CD8-positive, alpha-beta T cell (primary cell): ENCODE measurements at regions of chr3 and their contacts with region 1.

Region 1: DNA sequence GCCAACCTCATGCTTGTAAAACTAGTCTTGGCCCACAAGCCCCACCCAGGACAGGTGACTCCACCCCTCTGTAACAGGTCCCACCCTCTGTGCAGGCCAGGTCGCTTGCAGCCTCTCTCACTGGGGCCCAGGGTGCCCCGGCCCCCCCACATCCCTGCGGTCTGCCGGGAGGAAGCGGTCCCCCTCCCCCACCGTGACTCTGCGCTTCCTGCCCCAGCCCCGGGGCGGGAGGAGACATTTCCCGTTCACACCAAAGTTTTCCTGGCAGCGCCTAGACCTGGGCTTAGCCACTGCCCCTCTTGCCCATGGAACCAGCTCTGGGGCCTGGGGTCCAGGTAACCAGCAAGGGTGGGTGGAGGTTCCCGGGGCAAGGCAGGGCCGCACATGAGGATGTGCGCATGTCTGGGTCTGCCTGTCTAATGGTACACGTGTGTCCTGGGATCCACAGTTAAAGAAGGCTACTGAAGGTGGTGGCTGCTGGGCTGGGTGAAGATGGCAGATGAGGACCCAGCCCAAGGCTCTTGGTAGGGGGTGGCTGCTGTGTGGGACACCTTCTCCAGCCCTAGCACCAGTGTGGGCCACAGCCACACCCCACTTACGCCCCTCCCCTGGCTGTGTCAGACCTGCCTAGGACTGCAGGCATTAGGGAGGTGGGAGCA is 8.4 kb downstream of the NBEAL2 start:
- DNase-seq: peak; percentile 76 to 96 (median 90)
- ATAC-seq: peak; percentile 96
- H3K4me3 ChIP-seq: peak overlapping the region; percentile 23 to 42
- H3K4me3 Mint-ChIP-seq: peak overlapping the region; percentile 74
- H3K27ac ChIP-seq: peak overlapping the region in 1 of 2 experiments; percentile 67
- H3K27ac Mint-ChIP-seq: peak overlapping the region; percentile 87
- H3K4me1 ChIP-seq: peaks cover 56% of the 10 kb centered on the region
- H3K4me1 Mint-ChIP-seq: peaks cover 67% of the 10 kb centered on the region
- H3K27me3 ChIP-seq: no peaks in the 10 kb centered on the region
- H3K27me3 Mint-ChIP-seq: no peaks in the 10 kb centered on the region
- CTCF ChIP-seq: no peak

Region 2: DNA sequence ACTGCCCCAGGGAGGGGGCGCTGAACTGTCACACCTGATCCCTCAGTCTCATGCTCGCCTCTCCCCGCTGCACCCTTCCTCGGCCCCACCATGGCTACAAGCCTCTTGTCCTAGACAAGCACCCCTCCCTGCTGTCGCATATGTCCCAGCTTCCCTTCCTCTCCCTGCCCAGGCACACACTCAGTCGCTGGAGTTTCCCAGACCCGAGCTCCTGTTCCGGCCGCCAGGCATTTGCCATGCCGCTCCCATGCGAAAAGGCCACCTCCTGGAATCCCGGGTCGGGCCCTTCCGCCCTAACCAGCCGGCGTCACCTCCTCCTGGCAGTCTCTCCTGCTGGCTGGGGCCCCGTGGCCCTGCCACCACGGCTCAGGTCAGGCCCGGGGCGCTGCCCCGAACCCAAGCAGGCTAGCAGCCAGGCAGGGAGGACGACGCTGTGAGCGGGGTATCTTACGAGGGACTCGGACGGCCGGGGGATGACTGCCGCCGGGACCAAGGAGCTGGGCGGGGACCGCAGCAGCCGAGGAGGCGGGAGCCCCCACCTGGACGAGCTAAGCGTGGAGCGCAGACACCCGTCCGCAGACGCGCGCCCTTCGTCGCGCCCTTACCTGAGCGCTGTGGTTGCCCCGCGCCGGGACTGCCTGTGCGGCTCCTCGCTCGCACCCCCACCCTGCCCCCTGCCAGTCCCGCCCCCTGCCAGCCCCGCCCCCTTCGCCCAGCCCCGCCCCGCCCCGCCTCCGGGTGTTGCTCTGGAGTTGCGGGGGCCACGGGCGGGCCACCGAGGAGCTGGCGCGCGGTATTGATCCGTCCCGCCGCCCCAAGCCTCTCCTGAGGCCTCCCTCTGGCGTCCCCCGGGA is 294.6 kb before region 1 on chr3 and contains the start of gene ALS2CL:
- CTCF ChIA-PET with region 1: no interaction called
- POLR2A ChIA-PET with region 1: no interaction called
- intact Hi-C with region 1: loop called in 1 of 2 experiments (anchors 5 kb)
- DNase-seq: peak; percentile 50 to 84 (median 76)
- ATAC-seq: peak; percentile 83
- H3K4me3 ChIP-seq: peak within 1 kb of the TSS; percentile 65 to 76
- H3K4me3 Mint-ChIP-seq: peak within 1 kb of the TSS; percentile 89
- H3K27ac ChIP-seq: peak within 1 kb of the TSS in 1 of 2 experiments; percentile 21
- H3K27ac Mint-ChIP-seq: peak within 1 kb of the TSS; percentile 85
- H3K4me1 ChIP-seq: peaks cover 55% of the 10 kb centered on the region
- H3K4me1 Mint-ChIP-seq: peaks cover 48% of the 10 kb centered on the region
- H3K27me3 ChIP-seq: no peaks in the 10 kb centered on the region
- H3K27me3 Mint-ChIP-seq: no peaks in the 10 kb centered on the region
- CTCF ChIP-seq: no peak
- total RNA-seq, gene ALS2CL: 6.8 to 7.5 TPM

Region 3: GRCh38 chr3:46947981-46948791 is 39.7 kb before region 1 on chr3:
- CTCF ChIA-PET with region 1: interaction called, 3 read pairs
- POLR2A ChIA-PET with region 1: interaction called, 3 read pairs
- intact Hi-C with region 1: loop called in 1 of 2 experiments (anchors 5 kb)
- DNase-seq: peak; percentile 53 to 91 (median 79)
- ATAC-seq: peak; percentile 76
- H3K4me3 ChIP-seq: no peak overlapping the region
- H3K4me3 Mint-ChIP-seq: peak overlapping the region; percentile 33
- H3K27ac ChIP-seq: peak overlapping the region; percentile 39 to 77
- H3K27ac Mint-ChIP-seq: peak overlapping the region; percentile 97
- H3K4me1 ChIP-seq: peaks cover 78% of the 10 kb centered on the region
- H3K4me1 Mint-ChIP-seq: peaks cover 83% of the 10 kb centered on the region
- H3K27me3 ChIP-seq: no peaks in the 10 kb centered on the region
- H3K27me3 Mint-ChIP-seq: no peaks in the 10 kb centered on the region
- CTCF ChIP-seq: no peak

Region 4: DNA sequence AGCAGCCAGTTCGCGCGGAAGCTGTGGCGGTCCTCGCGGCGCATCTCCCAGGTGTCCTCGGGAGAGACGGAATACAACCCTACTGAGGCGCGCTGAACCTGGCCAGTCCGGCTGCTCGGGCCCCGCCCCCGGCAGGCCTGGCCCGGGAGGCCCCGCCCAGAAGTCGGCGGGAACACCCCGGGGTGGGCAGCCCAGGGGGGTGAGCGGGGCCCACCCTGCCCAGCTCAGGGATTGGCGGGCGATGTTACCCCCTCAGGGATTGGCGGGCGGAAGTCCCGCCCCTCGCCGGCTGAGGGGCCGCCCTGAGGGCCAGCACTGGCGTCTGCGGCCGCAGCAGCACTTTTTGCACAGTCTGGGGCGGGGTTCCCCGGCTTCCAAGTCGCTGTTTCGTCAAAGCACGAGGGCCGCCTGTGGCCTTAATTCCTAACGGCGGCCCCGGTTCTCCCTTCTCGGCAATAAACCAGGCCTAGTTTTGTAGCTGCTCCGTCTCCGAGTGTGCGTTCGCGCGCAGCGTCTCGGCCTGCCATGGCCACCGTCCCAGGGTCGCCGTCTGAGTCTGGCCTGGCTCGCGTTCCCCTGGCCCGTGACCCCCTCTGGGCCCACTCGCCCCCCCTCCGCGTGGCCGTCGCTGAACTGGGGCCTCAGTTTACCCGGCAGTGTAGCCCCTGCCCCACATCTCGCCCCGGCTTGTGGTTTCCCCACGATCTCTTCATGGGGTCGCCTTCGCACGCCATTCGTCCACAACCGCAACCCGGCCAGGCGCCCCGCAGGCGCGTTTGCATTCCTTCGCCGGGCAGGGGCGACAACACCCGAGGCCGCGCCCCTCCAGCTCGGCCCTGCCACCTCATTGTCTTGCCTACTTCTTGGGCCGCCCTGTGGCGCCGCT is 21.6 kb after region 1 on chr3:
- CTCF ChIA-PET with region 1: no interaction called
- POLR2A ChIA-PET with region 1: interaction called, 6 read pairs
- intact Hi-C with region 1: loop called in 1 of 2 experiments (anchors 1 kb)
- DNase-seq: peak; percentile 43 to 92 (median 86)
- ATAC-seq: peak; percentile 91
- H3K4me3 ChIP-seq: peak overlapping the region; percentile 52 to 66
- H3K4me3 Mint-ChIP-seq: peak overlapping the region; percentile 70
- H3K27ac ChIP-seq: peak overlapping the region; percentile 56 to 64
- H3K27ac Mint-ChIP-seq: peak overlapping the region; percentile 83
- H3K4me1 ChIP-seq: peaks cover 8% of the 10 kb centered on the region
- H3K4me1 Mint-ChIP-seq: peaks cover 8% of the 10 kb centered on the region
- H3K27me3 ChIP-seq: no peaks in the 10 kb centered on the region
- H3K27me3 Mint-ChIP-seq: no peaks in the 10 kb centered on the region
- CTCF ChIP-seq: no peak

Region 5: GRCh38 chr3:47282424-47283192 is 294.7 kb after region 1 on chr3 and contains the starts of genes KIF9 and KLHL18:
- CTCF ChIA-PET with region 1: no interaction called
- POLR2A ChIA-PET with region 1: no interaction called
- intact Hi-C with region 1: loop called in 1 of 2 experiments (anchors 1 kb)
- DNase-seq: peak; percentile 92 to 99 (median 96)
- ATAC-seq: peak; percentile 86
- H3K4me3 ChIP-seq: peak within 1 kb of the TSS; percentile 75 to 79
- H3K4me3 Mint-ChIP-seq: peak within 1 kb of the TSS; percentile 97
- H3K27ac ChIP-seq: peak within 1 kb of the TSS; percentile 98 to 99
- H3K27ac Mint-ChIP-seq: peak within 1 kb of the TSS; percentile 99
- H3K4me1 ChIP-seq: peaks cover 32% of the 10 kb centered on the region
- H3K4me1 Mint-ChIP-seq: peaks cover 40% of the 10 kb centered on the region
- H3K27me3 ChIP-seq: no peaks in the 10 kb centered on the region
- H3K27me3 Mint-ChIP-seq: no peaks in the 10 kb centered on the region
- CTCF ChIP-seq: no peak
- total RNA-seq, gene KIF9: 11.7 to 12.2 TPM
- total RNA-seq, gene KLHL18: 61.6 to 62.8 TPM

Region 6: DNA sequence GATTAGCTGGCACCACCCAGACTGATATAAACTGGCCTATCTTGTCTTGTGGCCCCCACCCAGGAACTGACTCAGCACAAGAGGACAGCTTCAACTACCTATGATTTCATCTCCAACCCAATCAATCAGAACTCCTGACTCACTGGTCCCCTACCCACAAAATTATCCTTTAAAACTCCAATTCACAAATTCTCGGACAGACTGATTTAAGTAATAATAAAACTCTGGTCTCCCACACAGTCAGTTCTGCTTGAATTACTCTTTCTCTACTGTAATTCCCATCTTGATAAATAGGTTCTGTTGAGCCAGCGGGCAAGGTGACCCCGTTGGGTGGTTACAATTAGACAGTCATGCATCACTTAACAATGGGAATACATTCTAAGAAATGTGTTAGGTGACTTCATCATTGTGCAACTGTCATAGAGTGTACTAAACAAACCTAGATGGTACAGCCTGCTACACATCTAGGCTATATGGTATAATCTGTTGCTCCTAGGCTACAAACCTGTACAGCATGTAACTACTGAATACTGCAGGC is 1076.5 kb after region 1 on chr3:
- CTCF ChIA-PET with region 1: no interaction called
- POLR2A ChIA-PET with region 1: no interaction called
- intact Hi-C with region 1: no loop called
- DNase-seq: no peak
- ATAC-seq: no peak
- H3K4me3 ChIP-seq: no peak overlapping the region
- H3K4me3 Mint-ChIP-seq: no peak overlapping the region
- H3K27ac ChIP-seq: no peak overlapping the region
- H3K27ac Mint-ChIP-seq: no peak overlapping the region
- H3K4me1 ChIP-seq: no peaks in the 10 kb centered on the region
- H3K4me1 Mint-ChIP-seq: peaks cover 18% of the 10 kb centered on the region
- H3K27me3 ChIP-seq: no peaks in the 10 kb centered on the region
- H3K27me3 Mint-ChIP-seq: no peaks in the 10 kb centered on the region
- CTCF ChIP-seq: no peak